ENCODE measurements at regions of chr17 and their contacts with region 1.

Region 1: DNA sequence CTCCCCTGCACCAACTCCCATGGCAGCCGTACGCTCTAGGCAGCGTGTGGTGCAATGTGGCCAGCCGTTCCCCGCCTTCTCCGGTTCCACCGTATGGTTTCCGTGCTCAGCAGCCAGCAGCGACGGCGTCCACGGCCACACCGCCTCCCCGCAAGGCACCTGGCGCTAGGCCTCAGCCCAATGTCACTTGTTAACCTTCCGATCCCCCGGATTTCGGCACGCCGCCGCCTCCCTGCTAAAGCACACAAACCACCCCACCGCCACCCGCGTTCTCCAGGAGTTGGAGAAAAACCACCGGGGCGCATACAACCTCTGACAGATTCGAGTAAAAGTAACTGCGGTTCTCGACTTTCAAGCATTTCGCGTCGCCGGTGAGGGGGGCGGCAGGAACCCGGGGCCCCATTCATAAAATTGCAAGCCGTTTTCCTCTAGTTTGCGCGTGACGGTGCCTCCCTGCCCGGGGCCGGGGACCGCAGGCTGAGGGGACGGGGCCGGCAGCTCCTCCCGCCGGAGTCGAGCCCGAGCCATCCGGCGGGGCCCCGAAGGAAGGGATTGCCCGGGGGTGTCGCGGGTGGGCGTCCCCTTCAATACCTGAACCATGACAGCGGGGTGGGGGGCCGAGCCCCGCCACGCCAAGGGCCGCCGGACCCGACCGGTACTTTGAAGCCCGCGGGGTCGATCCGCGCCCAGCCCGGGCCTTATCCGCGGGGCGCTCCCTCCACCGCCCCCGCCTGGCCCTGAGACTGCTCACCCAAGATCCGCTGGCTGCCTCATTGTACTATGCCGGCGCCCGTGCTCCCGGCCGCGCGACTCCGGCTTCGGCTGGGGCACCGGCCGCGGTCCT is at the start of gene TEX2:
- DNase-seq: peak; percentile 44 to 82 (median 74)
- ATAC-seq: peak; percentile 56
- H3K4me3 ChIP-seq: peak within 1 kb of the TSS; percentile 99
- H3K4me3 Mint-ChIP-seq: peak within 1 kb of the TSS; percentile 87 to 98 (median 94)
- H3K27ac ChIP-seq: peak within 1 kb of the TSS; percentile 90
- H3K27ac Mint-ChIP-seq: peak within 1 kb of the TSS; percentile 87 to 98 (median 93)
- H3K4me1 ChIP-seq: peaks cover 18% of the 10 kb centered on the region in 2 donors
- H3K4me1 Mint-ChIP-seq: peaks cover 22 to 50% (median 42%) of the 10 kb centered on the region in 7 donors
- H3K27me3 ChIP-seq: no peaks in the 10 kb centered on the region
- H3K27me3 Mint-ChIP-seq: peaks cover 0 to 11% (median 5%) of the 10 kb centered on the region in 5 donors
- total RNA-seq, gene TEX2: 14.1 to 24.2 (median 14.4) TPM

Region 2: DNA sequence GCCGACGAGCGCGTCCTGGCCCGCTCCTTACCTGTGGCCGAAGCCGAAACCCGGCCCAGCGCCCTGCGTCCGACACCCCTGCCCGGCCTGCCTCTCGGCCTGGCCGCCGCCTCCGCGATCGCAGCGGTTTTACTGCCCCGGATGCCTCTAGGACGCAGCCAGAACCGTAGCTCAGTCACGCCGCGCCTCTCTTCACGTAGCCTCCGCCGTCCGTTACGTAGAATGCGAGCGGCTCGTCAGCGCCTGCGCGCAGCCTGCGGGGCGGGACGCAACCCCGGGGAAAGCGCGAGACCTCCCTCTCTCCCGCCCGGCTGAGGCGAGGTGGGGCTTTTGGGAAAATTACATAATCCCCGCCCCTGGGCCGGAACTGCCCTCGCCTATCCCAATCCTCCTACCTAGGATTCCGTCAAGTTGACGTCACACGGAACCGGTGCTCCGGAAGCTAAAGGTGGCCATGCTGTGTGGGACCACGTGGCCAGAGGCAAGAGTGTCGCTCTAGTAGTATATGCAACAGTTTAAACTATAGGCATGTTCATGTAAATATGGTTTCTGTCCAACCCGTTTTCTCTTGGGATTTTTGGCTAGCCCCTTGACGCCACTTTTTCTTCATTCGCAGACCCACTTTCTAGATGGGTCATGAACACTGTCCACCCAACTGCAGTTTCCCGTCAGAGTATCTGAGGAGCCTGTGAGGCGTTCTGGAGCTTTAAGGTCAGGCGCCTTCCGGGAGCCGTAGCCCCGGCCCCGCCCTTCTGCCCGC is 489.1 kb before region 1 on chr17 and contains the start of gene CCDC47:
- CTCF ChIA-PET with region 1: no interaction called
- POLR2A ChIA-PET with region 1: no interaction called
- intact Hi-C with region 1: loop called in 1 of 2 experiments (anchors 2 kb)
- DNase-seq: peak; percentile 92 to 99 (median 99)
- ATAC-seq: peak; percentile 88
- H3K4me3 ChIP-seq: peak within 1 kb of the TSS; percentile 85
- H3K4me3 Mint-ChIP-seq: peak within 1 kb of the TSS; percentile 91 to 99 (median 98)
- H3K27ac ChIP-seq: peak within 1 kb of the TSS; percentile 100
- H3K27ac Mint-ChIP-seq: peak within 1 kb of the TSS; percentile 97 to 100 (median 99)
- H3K4me1 ChIP-seq: peaks cover 21 to 46% of the 10 kb centered on the region in 2 donors
- H3K4me1 Mint-ChIP-seq: peaks cover 31 to 84% (median 62%) of the 10 kb centered on the region in 7 donors
- H3K27me3 ChIP-seq: no peaks in the 10 kb centered on the region
- H3K27me3 Mint-ChIP-seq: peaks cover 0 to 7% (median 0%) of the 10 kb centered on the region in 5 donors
- total RNA-seq, gene CCDC47: 31.8 to 62.9 (median 34.7) TPM

Region 3: DNA sequence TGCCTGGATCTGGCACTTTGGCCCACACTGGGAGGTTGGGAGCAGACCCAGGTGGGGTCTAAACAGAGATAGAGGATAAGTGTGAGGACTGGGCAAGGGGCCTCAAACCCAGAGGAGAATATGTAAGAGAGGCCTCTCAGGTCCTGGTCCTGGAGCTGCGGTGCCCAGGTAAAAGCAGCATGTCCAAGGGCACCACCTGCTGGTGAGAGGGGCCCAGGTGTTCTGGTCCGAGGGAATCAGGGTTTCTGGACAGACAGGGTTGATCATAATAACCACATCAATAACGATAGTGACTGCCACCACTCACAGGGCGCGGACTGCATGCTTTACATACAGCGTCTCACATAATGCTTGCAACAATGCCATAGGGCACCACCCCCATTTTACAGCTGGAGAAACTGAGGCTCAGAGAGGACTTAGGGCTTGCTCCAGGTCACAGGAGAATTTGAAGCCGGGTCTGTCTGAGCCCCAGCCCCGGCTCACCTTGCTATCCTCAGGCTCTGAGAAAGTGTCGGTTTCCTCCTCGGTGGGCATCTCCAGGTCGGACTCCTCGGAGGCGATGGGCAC is 311.6 kb before region 1 on chr17:
- CTCF ChIA-PET with region 1: no interaction called
- POLR2A ChIA-PET with region 1: no interaction called
- intact Hi-C with region 1: no loop called
- DNase-seq: no peak
- ATAC-seq: no peak
- H3K4me3 ChIP-seq: no peak overlapping the region
- H3K4me3 Mint-ChIP-seq: no peak overlapping the region
- H3K27ac ChIP-seq: no peak overlapping the region
- H3K27ac Mint-ChIP-seq: peak overlapping the region in 2 of 9 donors; percentile 65 to 69
- H3K4me1 ChIP-seq: peaks cover 29 to 31% of the 10 kb centered on the region in 2 donors
- H3K4me1 Mint-ChIP-seq: peaks cover 15 to 38% (median 26%) of the 10 kb centered on the region in 7 donors
- H3K27me3 ChIP-seq: no peaks in the 10 kb centered on the region
- H3K27me3 Mint-ChIP-seq: no peaks in the 10 kb centered on the region

Region 4: DNA sequence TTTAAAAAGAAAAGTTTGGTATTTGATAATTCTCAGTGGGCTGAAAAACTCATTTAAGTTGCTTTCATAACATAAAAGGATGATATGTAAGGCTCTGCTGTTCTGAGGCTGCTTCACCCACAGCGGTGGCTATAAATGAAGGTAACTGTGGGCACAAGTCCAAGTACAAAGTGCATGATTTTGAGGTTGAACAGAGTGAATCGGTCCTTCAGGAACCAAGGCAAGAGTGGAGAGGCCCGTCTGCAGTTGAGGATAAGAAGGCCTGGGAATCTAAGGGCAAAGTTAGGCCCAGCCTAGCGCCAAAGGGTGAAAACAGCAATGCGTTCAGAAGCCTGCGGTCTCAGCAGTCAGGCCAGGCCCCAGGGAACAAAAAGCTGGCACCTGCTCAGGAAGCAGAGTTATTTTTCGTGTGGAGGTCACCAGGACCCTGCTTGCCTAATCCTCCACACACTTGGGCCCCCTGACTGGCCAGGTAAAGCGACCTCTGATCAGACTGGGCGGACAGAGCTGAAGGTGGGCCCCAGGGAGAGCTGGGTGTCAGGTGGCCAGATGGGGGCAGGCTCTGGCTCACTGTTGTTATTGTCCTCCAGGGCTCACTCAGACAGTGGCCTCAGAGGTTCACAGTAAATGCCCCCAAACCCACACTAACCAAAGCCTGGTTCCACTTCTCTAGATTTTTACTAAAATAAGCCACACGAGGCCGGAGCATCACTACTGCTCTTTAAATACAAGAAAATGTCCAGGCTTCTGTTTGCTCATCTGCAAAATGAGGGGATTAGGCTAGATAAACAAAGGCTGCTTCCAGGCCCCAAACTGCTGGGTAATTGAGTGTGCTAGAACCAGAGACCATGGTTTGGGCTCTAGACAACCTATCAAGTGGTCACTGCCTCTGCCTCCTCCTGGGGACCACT is 46.0 kb before region 1 on chr17:
- CTCF ChIA-PET with region 1: no interaction called
- POLR2A ChIA-PET with region 1: interaction called, 5 read pairs
- intact Hi-C with region 1: loop called in 1 of 2 experiments (anchors 2 kb)
- DNase-seq: no peak
- ATAC-seq: no peak
- H3K4me3 ChIP-seq: no peak overlapping the region
- H3K4me3 Mint-ChIP-seq: peak overlapping the region in 1 of 10 donors; percentile 36
- H3K27ac ChIP-seq: no peak overlapping the region
- H3K27ac Mint-ChIP-seq: peak overlapping the region in 7 of 9 donors; percentile 44 to 88 (median 77)
- H3K4me1 ChIP-seq: peaks cover 0 to 7% of the 10 kb centered on the region in 2 donors
- H3K4me1 Mint-ChIP-seq: peaks cover 9 to 47% (median 40%) of the 10 kb centered on the region in 7 donors
- H3K27me3 ChIP-seq: no peaks in the 10 kb centered on the region
- H3K27me3 Mint-ChIP-seq: no peaks in the 10 kb centered on the region

Region 5: GRCh38 chr17:64300699-64300965 is 38.0 kb after region 1 on chr17:
- CTCF ChIA-PET with region 1: no interaction called
- POLR2A ChIA-PET with region 1: no interaction called
- intact Hi-C with region 1: loop called in 1 of 2 experiments (anchors 2 kb)
- DNase-seq: no peak
- ATAC-seq: no peak
- H3K4me3 ChIP-seq: no peak overlapping the region
- H3K4me3 Mint-ChIP-seq: no peak overlapping the region
- H3K27ac ChIP-seq: no peak overlapping the region
- H3K27ac Mint-ChIP-seq: no peak overlapping the region
- H3K4me1 ChIP-seq: no peaks in the 10 kb centered on the region
- H3K4me1 Mint-ChIP-seq: no peaks in the 10 kb centered on the region
- H3K27me3 ChIP-seq: no peaks in the 10 kb centered on the region
- H3K27me3 Mint-ChIP-seq: peaks cover 0 to 4% (median 0%) of the 10 kb centered on the region in 5 donors

Region 6: DNA sequence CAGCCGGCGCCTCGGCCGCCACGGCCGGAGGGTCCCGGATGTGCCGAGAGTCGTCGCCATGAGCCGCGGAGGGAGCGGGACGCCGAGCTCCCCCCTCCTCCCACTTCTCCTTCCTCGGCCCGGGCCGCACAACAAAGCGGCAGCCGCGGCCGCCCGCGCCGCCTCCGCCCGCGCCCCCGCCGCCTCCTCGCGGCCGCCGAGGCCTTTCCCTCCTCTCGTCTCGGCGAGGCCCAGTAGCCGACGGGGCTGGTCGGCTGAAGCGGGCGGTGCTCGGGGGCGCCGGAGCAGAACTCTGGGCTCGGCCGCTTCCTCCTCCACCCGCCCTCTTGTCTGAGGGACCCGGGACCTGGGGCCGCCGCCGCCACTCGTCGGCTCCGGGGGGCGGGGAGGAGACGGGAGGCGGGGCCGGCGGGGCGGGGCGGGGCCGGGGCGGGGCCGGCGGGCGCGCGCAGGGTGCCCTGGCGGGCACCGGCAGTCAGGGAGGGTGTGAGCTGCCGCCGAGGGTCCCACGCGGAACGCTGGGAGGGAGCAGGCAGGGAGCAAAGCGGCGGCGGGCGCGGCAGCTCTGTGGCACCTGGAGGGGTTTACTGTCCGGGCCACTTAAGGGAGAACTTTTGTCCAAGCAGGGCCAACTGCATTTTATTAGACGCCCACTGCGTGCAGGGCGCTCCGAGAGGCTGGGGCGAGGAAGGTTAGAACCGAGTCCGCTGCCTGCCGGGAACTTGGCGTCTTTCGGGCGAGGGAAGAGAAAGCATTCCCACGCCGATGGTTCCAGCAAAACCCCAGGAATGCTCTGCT is 399.5 kb after region 1 on chr17 and contains the start of gene SMURF2:
- CTCF ChIA-PET with region 1: no interaction called
- POLR2A ChIA-PET with region 1: no interaction called
- intact Hi-C with region 1: loop called in 1 of 2 experiments (anchors 1 kb)
- DNase-seq: peak; percentile 72 to 84 (median 80)
- ATAC-seq: peak; percentile 96
- H3K4me3 ChIP-seq: peak within 1 kb of the TSS; percentile 77
- H3K4me3 Mint-ChIP-seq: peak within 1 kb of the TSS; percentile 87 to 99 (median 98)
- H3K27ac ChIP-seq: peak within 1 kb of the TSS; percentile 72
- H3K27ac Mint-ChIP-seq: peak within 1 kb of the TSS; percentile 85 to 96 (median 95)
- H3K4me1 ChIP-seq: peaks cover 12 to 18% of the 10 kb centered on the region in 2 donors
- H3K4me1 Mint-ChIP-seq: peaks cover 28 to 42% (median 34%) of the 10 kb centered on the region in 7 donors
- H3K27me3 ChIP-seq: no peaks in the 10 kb centered on the region
- H3K27me3 Mint-ChIP-seq: no peaks in the 10 kb centered on the region
- total RNA-seq, gene SMURF2: 17.0 to 35.7 (median 32.1) TPM

Measured in naive thymus-derived CD4-positive, alpha-beta T cell (primary cell).